Left lung (tissue), 14 donors: ENCODE measurements at regions of chr1 and their contacts with region 1.

Region 1: DNA sequence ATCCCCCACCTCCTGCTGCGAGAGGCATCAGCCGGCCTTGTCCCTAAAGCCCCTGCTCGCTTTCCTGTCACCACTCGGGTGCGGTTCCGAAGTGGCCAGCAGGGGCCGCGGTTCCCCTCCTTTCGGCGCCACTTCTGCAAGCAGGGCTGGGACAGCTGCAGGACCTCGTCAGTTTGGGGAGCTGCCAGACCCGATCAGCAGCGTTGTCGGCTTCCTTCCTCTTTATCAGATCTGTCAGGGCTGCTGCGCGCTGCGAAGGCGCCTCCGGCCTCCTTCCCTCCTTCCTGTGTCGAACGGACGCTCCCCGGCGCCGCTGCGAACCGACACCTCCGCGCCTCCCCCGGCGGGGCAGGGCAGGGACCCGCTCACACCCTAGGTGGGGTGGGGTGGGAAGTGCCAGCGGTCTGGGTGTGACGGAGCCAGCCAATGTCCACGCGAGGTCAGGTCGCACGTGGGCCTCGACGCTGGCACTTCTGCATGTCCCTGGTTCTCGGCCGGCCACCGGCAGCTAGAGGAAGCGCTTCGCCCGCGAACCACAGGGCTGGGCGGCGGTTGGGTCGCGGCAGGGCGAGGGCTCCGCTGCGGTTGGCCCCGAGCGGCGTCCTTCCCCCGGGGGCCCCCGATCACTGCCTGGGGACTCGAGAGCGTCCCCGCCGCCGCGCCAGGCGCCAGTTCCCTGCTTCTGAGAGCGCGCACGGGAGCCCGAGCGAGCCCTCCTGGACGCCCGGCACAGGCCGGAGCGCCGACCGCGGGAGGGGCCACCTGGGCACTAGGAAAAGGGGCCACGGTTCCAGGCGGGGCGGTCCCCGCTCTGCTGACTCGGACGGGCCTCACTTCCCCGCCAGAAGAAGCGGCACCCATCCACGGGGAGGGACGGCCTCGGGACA is 81.8 kb downstream of the RUNX3 start:
- DNase-seq: peak; percentile 94 to 97 (median 95)
- ATAC-seq: peak; percentile 96
- H3K4me3 ChIP-seq: peak overlapping the region; percentile 29 to 36
- H3K27ac ChIP-seq: peak overlapping the region; percentile 57 to 75
- H3K4me1 ChIP-seq: peaks cover 4 to 32% of the 10 kb centered on the region in 2 donors
- H3K27me3 ChIP-seq: no peaks in the 10 kb centered on the region
- CTCF ChIP-seq: peak; percentile 90 to 92

Region 2: GRCh38 chr1:24635195-24635843 is 212.9 kb before region 1 on chr1:
- intact Hi-C with region 1: no loop called
- DNase-seq: peak in 2 of 4 donors; percentile 51 to 69
- ATAC-seq: peak; percentile 90
- H3K4me3 ChIP-seq: no peak overlapping the region
- H3K27ac ChIP-seq: no peak overlapping the region
- H3K4me1 ChIP-seq: no peaks in the 10 kb centered on the region
- H3K27me3 ChIP-seq: no peaks in the 10 kb centered on the region
- CTCF ChIP-seq: peak; percentile 18 to 53

Region 3: DNA sequence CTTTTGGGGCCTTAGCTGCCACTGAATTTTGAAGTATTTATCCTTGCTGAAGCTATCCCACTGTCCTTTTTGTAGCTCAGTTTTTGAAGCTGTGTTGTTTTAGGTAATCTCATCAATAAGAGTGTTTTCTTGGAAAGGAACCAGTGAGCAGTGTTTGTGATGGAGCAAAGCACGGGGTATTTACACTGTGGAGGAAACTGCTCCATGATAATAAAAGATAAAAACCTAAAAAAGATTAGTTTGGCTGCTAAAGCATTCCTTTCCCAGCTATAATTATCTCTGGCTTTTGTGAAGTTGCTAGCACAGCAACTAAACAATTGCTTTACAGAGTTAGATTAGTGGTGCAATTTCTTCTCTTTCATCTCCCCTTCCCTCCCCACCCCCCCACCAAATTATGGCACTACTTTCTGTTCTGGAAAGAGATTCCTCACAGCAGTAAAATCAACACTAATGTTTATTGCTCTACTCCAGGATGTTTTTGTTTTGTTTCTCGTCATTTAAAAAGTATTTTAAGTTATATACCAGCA is 183.7 kb before region 1 on chr1:
- intact Hi-C with region 1: no loop called
- DNase-seq: no peak
- ATAC-seq: no peak
- H3K4me3 ChIP-seq: no peak overlapping the region
- H3K27ac ChIP-seq: no peak overlapping the region
- H3K4me1 ChIP-seq: no peaks in the 10 kb centered on the region
- H3K27me3 ChIP-seq: no peaks in the 10 kb centered on the region
- CTCF ChIP-seq: no peak

Region 4: GRCh38 chr1:25099343-25099951 is 251.2 kb after region 1 on chr1:
- intact Hi-C with region 1: loop called in 1 of 2 experiments (anchors 5 kb)
- DNase-seq: no peak
- ATAC-seq: no peak
- H3K4me3 ChIP-seq: no peak overlapping the region
- H3K27ac ChIP-seq: no peak overlapping the region
- H3K4me1 ChIP-seq: peaks cover 0 to 27% of the 10 kb centered on the region in 2 donors
- H3K27me3 ChIP-seq: peaks cover 0 to 13% of the 10 kb centered on the region in 2 donors
- CTCF ChIP-seq: no peak

Region 5: GRCh38 chr1:25167331-25168199 is 319.3 kb after region 1 on chr1:
- intact Hi-C with region 1: no loop called
- DNase-seq: no peak
- ATAC-seq: no peak
- H3K4me3 ChIP-seq: no peak overlapping the region
- H3K27ac ChIP-seq: no peak overlapping the region
- H3K4me1 ChIP-seq: no peaks in the 10 kb centered on the region
- H3K27me3 ChIP-seq: no peaks in the 10 kb centered on the region
- CTCF ChIP-seq: no peak